ENCODE measurements at regions of chr6 and their contacts with region 1.

Region 1: GRCh38 chr6:143232849-143233248 is 172.2 kb downstream of the AIG1 start:
- DNase-seq: peak; percentile 65
- ATAC-seq: peak; percentile 98
- H3K4me3 ChIP-seq: no peak overlapping the region
- H3K27ac ChIP-seq: no peak overlapping the region
- H3K4me1 ChIP-seq: no peaks in the 10 kb centered on the region
- H3K27me3 ChIP-seq: no peaks in the 10 kb centered on the region
- CTCF ChIP-seq: peak; percentile 88
- EP300 ChIP-seq: no peak
- POLR2A ChIP-seq: no peak
- RAD21 ChIP-seq: peak; percentile 86

Region 2: GRCh38 chr6:143187238-143187923 is 45.5 kb before region 1 on chr6:
- CTCF ChIA-PET with region 1: no interaction called
- POLR2A ChIA-PET with region 1: no interaction called
- in situ Hi-C with region 1: no loop called
- intact Hi-C with region 1: no loop called
- DNase-seq: no peak
- ATAC-seq: no peak
- H3K4me3 ChIP-seq: no peak overlapping the region
- H3K27ac ChIP-seq: no peak overlapping the region
- H3K4me1 ChIP-seq: no peaks in the 10 kb centered on the region
- H3K27me3 ChIP-seq: no peaks in the 10 kb centered on the region
- CTCF ChIP-seq: no peak
- EP300 ChIP-seq: no peak
- POLR2A ChIP-seq: no peak
- RAD21 ChIP-seq: no peak

Region 3: DNA sequence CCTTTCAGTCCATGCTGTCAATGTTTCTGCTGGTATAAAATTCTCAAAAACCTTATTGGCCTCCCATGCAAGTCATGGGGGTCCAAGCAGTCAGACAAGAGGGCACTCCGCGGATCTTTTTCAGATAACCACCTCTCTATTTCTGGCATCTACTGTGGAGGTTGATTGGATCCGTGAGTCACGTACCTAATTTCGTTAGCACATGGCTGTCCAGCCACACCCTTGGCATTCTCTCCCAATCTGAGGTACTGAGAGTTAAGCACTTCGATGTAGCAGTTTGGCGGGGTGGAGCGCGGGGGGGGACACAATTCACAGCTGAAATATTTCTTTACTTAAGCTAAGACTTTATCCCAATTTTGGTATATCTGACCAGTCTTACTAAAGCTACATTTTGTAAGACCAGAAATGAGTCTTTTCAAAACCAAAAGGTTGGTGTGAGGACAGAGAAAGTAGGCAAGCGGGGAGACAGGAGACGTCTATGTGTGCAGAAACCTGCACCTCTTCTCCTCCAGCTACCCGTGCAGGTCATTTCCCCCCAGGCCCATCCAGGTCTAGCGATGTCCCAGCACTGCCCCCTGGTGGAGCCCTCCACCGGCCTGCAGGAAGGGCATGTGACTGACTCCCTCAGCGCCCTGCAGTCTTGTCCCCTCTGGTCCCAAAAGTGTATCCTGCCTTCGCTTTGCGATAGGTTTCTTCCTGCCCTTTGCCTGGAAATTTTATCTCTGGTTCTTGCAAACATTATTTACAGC is 104.5 kb after region 1 on chr6:
- CTCF ChIA-PET with region 1: no interaction called
- POLR2A ChIA-PET with region 1: no interaction called
- in situ Hi-C with region 1: no loop called
- intact Hi-C with region 1: loop called (anchors 1 kb)
- DNase-seq: peak; percentile 16
- ATAC-seq: peak; percentile 92
- H3K4me3 ChIP-seq: no peak overlapping the region
- H3K27ac ChIP-seq: no peak overlapping the region
- H3K4me1 ChIP-seq: no peaks in the 10 kb centered on the region
- H3K27me3 ChIP-seq: no peaks in the 10 kb centered on the region
- CTCF ChIP-seq: peak; percentile 81
- EP300 ChIP-seq: no peak
- POLR2A ChIP-seq: no peak
- RAD21 ChIP-seq: peak; percentile 53